GM10248 (cell line): ENCODE measurements at regions of chr15 and their contacts with region 1.

Region 1: DNA sequence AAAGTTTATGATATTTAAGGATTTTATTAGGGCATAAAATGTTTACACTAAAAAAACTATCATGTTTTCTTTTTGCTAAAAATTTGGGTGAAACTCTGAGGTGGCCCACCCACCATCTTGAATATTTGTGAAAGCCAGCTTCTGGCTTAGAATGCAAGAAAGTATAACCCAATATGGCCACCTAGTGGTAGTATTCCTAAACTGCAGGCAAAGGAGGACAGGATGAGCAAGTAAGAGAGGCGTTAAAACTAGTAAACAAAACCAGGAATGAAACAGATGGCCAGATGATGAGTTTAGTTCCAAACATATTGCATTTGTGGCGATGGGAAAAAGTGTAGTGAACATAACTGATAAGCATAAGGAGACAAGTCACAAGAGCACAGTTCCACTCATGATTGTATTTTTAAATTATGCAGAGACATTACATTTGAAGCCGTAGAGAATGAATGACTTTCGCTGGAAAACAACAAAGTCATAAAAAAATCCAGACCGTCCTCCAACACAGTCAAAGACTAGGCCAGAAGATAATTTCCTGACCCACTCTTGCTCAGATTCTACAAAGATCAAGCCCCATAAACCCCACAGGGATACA is 103.3 kb upstream of the PRTG start:
- DNase-seq: peak; percentile 68
- CTCF ChIP-seq: peak; percentile 87

Region 2: DNA sequence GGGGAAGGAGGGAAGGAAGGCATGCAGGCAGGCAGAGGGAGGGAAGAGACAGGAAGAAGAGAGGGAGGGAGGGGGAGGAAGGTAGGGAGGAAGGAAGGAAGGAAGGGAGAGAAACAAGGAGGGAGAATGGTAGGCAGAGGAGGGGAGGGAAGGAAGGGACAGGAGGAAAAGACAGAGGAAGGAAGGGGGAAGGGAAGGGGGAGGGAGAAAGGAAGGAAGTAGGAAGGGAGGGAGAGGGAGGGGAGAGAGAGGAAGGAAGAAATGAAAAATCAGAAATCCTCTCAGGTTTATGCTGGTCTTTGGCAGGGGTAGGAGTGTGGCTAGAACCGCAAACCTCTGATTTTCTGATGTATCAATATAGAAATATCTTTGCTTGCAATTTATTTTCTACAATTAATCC is 107.5 kb before region 1 on chr15:
- CTCF ChIA-PET with region 1: no interaction called
- POLR2A ChIA-PET with region 1: no interaction called
- DNase-seq: no peak
- CTCF ChIP-seq: no peak

Region 3: GRCh38 chr15:55834331-55834730 is 11.9 kb before region 1 on chr15:
- CTCF ChIA-PET with region 1: interaction called, 21 read pairs
- POLR2A ChIA-PET with region 1: no interaction called
- DNase-seq: no peak
- CTCF ChIP-seq: no peak

Region 4: DNA sequence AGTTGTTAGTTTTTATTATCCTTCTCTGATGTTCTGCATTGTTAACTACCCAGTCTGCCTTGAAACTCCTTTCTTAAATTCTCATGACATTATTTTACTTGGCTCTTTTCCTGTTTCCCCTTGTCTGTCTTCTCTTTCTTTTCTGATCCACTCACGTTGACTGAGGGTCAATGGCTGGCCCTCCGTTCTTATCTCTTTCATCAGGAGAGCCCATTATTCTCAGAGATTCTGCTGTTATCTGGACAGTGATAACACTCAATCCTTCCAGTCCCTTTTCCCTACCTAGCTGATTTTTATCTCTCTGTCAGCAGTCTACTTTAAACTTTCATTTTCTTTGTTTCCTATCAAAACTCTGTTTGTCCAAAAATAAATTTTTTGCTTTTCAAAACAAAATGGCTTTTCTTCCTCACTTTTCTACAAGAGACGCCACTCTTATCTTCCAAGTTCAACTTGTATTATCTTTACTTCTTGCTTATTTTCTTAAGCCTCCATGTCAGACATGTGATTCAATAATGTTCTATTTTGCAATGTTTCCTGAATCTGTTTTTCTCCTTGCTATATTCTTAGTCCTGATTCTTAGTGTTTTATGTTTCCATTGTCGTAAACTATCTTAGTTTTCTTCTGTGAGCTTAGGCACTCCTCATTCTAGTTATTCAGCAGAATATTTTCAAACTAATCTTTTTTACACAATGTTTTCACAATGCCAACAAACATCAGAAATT is 27.0 kb after region 1 on chr15:
- CTCF ChIA-PET with region 1: no interaction called
- POLR2A ChIA-PET with region 1: no interaction called
- DNase-seq: no peak
- CTCF ChIP-seq: no peak

Region 5: GRCh38 chr15:55884223-55884622 is 38.0 kb after region 1 on chr15:
- CTCF ChIA-PET with region 1: no interaction called
- POLR2A ChIA-PET with region 1: no interaction called
- DNase-seq: no peak
- CTCF ChIP-seq: no peak